GM12878 (cell line): ENCODE measurements at regions of chr11 and their contacts with region 1.

Region 1: DNA sequence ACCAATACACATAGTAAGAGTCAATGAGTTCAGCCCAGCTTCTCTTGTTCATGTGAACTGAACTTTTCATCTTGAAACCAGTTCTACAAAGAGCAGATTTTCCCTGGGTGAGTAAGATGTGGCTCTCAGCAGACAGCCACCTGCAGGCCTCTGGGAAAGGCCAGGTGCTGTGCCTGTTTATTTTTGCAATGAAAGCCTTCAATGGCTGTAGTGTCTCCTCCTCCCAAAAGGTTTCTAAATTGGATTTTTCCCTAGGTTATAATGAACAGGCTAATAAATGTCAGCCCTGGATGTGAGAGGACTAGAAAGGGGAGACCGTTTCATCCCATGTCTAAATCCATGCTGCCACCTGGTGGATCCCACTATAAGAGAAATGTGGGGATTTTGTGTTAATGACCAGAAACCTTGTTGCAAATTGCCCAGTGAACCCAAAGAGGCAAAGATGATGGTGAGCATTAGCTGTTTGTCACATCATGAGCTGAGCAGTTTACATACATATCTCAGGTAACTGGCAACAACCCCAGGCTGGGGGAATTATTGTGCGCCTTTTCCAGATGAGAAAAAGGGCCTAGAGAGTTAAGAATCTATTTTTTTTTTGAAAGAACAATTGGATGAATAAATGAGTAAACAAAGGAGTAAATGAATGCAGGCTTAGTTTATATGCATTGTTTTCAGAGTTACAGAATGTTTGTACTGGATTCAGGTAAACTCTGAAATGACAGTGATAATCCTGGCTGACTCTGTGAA is 12.7 kb downstream of the C11orf91 start:
- DNase-seq: peak; percentile 33
- ATAC-seq: peak; percentile 74
- H3K4me3 ChIP-seq: no peak overlapping the region
- H3K27ac ChIP-seq: no peak overlapping the region; the same call in 1 of the 2 replicates
- H3K4me1 ChIP-seq: peaks cover 3% of the 10 kb centered on the region; the same call in 1 of the 2 replicates
- H3K27me3 ChIP-seq: no peaks in the 10 kb centered on the region
- CTCF ChIP-seq: peak; percentile 60 to 71 (median 62)
- EP300 ChIP-seq: no peak
- POLR2A ChIP-seq: no peak
- RAD21 ChIP-seq: peak; percentile 92

Region 2: DNA sequence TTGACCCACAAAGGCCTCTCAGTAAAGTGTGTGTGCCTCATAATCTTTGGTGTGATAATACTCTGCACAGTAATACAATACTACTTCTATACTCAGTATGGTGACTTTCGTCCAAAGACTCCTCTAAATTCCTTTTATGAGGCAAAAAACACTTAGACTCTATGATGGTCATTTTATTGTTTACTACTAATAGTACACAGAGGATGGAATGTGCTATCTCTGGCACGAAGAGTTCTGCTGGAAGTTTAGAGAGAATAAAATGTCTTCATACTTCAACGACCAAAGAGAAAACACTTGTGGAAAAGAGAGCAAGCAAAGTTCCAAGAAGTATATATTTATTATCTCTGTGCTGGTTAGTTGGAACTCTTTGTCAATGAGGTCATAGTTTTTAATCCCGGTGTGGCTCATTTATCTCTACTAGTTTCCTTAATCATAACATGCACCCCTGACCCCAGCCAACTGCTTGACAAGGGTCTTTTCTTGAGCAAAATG is 519.2 kb before region 1 on chr11:
- CTCF ChIA-PET with region 1: interaction called, 4 read pairs
- POLR2A ChIA-PET with region 1: no interaction called
- RAD21 ChIA-PET with region 1: interaction called, 3 read pairs
- SMC1A ChIA-PET with region 1: interaction called, 3 read pairs
- in situ Hi-C with region 1: no loop called
- intact Hi-C with region 1: loop called (anchors 5 kb)
- DNase-seq: no peak
- ATAC-seq: no peak
- H3K4me3 ChIP-seq: no peak overlapping the region
- H3K27ac ChIP-seq: no peak overlapping the region
- H3K4me1 ChIP-seq: no peaks in the 10 kb centered on the region
- H3K27me3 ChIP-seq: no peaks in the 10 kb centered on the region
- CTCF ChIP-seq: no peak
- EP300 ChIP-seq: no peak
- POLR2A ChIP-seq: no peak
- RAD21 ChIP-seq: no peak

Region 3: GRCh38 chr11:33272338-33273107 is 415.4 kb before region 1 on chr11:
- CTCF ChIA-PET with region 1: no interaction called
- POLR2A ChIA-PET with region 1: no interaction called
- RAD21 ChIA-PET with region 1: no interaction called
- SMC1A ChIA-PET with region 1: no interaction called
- in situ Hi-C with region 1: no loop called
- intact Hi-C with region 1: no loop called
- DNase-seq: no peak
- ATAC-seq: no peak
- H3K4me3 ChIP-seq: no peak overlapping the region
- H3K27ac ChIP-seq: no peak overlapping the region
- H3K4me1 ChIP-seq: no peaks in the 10 kb centered on the region
- H3K27me3 ChIP-seq: no peaks in the 10 kb centered on the region
- CTCF ChIP-seq: no peak
- EP300 ChIP-seq: no peak
- POLR2A ChIP-seq: no peak
- RAD21 ChIP-seq: no peak

Region 4: GRCh38 chr11:33542921-33543320 is 145.0 kb before region 1 on chr11:
- CTCF ChIA-PET with region 1: interaction called, 4 read pairs
- POLR2A ChIA-PET with region 1: no interaction called
- RAD21 ChIA-PET with region 1: interaction called, 3 read pairs
- SMC1A ChIA-PET with region 1: interaction called, 5 read pairs
- in situ Hi-C with region 1: no loop called
- intact Hi-C with region 1: loop called (anchors 1 kb)
- DNase-seq: no peak
- ATAC-seq: peak; percentile 84
- H3K4me3 ChIP-seq: no peak overlapping the region
- H3K27ac ChIP-seq: no peak overlapping the region
- H3K4me1 ChIP-seq: peaks cover 24% of the 10 kb centered on the region
- H3K27me3 ChIP-seq: no peaks in the 10 kb centered on the region; a peak in 1 of 4 replicates
- CTCF ChIP-seq: peak; percentile 63 to 72 (median 67)
- EP300 ChIP-seq: no peak
- POLR2A ChIP-seq: no peak
- RAD21 ChIP-seq: peak; percentile 74

Region 5: GRCh38 chr11:33766085-33766484 is 78.2 kb after region 1 on chr11:
- CTCF ChIA-PET with region 1: no interaction called
- POLR2A ChIA-PET with region 1: no interaction called
- RAD21 ChIA-PET with region 1: no interaction called
- SMC1A ChIA-PET with region 1: no interaction called
- in situ Hi-C with region 1: no loop called
- intact Hi-C with region 1: no loop called
- DNase-seq: no peak
- ATAC-seq: no peak
- H3K4me3 ChIP-seq: no peak overlapping the region
- H3K27ac ChIP-seq: no peak overlapping the region
- H3K4me1 ChIP-seq: peaks cover 10% of the 10 kb centered on the region
- H3K27me3 ChIP-seq: no peaks in the 10 kb centered on the region
- CTCF ChIP-seq: no peak
- EP300 ChIP-seq: no peak
- POLR2A ChIP-seq: no peak
- RAD21 ChIP-seq: no peak